ENCODE measurements at regions of chr2 and their contacts with region 1.

Region 1: GRCh38 chr2:152344579-152345195 is 9.7 kb downstream of the FMNL2 start:
- DNase-seq: no peak
- ATAC-seq: no peak

Region 2: GRCh38 chr2:152466980-152467676 is 122.4 kb after region 1 on chr2:
- intact Hi-C with region 1: loop called (anchors 5 kb)
- DNase-seq: no peak
- ATAC-seq: peak; percentile 45